PC-9 (cell line): ENCODE measurements at regions of chr1 and their contacts with region 1.

Region 1: GRCh38 chr1:201895913-201896807 is 7.5 kb downstream of the SHISA4 start:
- DNase-seq: peak; percentile 75 to 89
- H3K4me3 ChIP-seq: no peak overlapping the region
- H3K27ac ChIP-seq: peak overlapping the region; percentile 61
- H3K4me1 ChIP-seq: peaks cover 29% of the 10 kb centered on the region
- H3K27me3 ChIP-seq: no peaks in the 10 kb centered on the region
- CTCF ChIP-seq: peak; percentile 98

Region 2: DNA sequence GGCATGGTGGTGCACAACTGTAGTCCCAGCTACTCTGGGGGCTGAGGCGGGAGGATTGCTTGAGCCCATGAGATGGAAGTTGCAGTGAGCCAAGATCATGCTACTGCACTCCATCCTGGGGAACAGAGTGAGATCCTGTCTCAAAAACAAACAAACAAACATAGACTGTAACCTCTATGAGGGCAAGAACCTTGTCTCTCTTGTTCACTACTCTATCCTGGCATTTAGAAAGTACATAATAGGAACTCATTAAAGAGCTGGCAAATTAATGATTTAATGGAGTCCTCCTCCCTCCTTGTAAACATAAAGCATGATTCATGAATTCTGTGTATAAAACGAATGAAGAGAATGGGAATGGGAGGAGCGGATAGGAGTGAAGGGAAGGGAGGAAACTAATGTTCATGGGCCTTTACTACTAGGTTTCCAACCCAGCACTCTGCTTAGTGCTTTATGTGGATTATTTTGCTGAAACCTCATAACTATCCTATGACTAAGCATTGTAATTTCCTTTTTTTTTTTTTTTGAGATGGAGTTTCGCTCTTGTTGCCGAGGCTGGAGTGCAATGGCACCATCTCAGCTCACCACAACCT is 41.6 kb after region 1 on chr1:
- CTCF ChIA-PET with region 1: interaction called, 12 read pairs
- POLR2A ChIA-PET with region 1: no interaction called
- intact Hi-C with region 1: no loop called
- DNase-seq: peak in 1 of 2 experiments; percentile 52
- H3K4me3 ChIP-seq: no peak overlapping the region
- H3K27ac ChIP-seq: peak overlapping the region; percentile 62
- H3K4me1 ChIP-seq: peaks cover 27% of the 10 kb centered on the region
- H3K27me3 ChIP-seq: no peaks in the 10 kb centered on the region
- CTCF ChIP-seq: no peak

Region 3: DNA sequence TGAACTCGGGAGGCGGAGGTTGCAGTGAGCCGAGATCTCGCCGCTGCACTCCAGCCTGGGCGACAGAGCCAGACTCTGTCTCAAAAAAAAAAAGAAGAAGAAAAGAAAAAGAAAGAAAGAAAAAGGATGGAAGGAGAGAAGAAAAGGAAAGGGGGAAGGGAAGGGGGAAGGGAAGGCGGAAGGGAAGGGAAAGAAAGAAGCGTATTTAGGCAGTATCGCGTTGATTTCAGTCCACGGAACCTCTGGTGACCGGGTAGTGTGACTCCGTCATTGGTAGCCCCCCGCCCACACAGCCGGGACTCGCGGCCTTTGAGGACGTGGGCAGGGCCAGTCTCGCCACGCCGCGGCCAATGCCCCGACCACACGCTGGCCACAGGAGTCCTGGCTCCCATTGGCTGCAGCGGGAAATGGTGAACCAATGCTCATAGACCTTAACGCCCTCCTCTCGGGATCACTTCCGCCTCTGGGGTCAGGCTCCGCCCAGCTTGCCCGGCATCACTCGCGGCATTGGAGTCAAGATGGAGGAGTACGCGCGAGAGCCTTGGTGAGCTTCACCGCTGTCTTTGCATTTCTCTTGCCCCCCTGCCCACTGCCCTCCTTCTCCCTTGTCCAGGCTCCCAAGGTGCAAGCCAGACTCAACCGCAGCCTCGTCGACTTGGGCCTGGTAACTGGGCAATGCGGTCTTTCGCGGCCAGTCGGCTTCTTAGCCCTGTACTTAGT is 59.0 kb after region 1 on chr1 and contains the start of gene TIMM17A:
- CTCF ChIA-PET with region 1: interaction called, 3 read pairs
- POLR2A ChIA-PET with region 1: no interaction called
- intact Hi-C with region 1: loop called (anchors 1 kb)
- DNase-seq: peak; percentile 95
- H3K4me3 ChIP-seq: peak within 1 kb of the TSS; percentile 92
- H3K27ac ChIP-seq: peak within 1 kb of the TSS; percentile 83
- H3K4me1 ChIP-seq: peaks cover 10% of the 10 kb centered on the region; the same call in 1 of the 2 replicates
- H3K27me3 ChIP-seq: no peaks in the 10 kb centered on the region
- CTCF ChIP-seq: no peak
- total RNA-seq, gene TIMM17A: 55.7 and 60.4 TPM in 2 replicates

Region 4: GRCh38 chr1:201970334-201971159 is 74.4 kb after region 1 on chr1:
- CTCF ChIA-PET with region 1: interaction called, 16 read pairs
- POLR2A ChIA-PET with region 1: interaction called, 8 read pairs
- intact Hi-C with region 1: loop called (anchors 1 kb)
- DNase-seq: no peak
- H3K4me3 ChIP-seq: no peak overlapping the region
- H3K27ac ChIP-seq: no peak overlapping the region
- H3K4me1 ChIP-seq: 0 out of 2 replicates have a peak, but pooled peaks cover 6% of the 10 kb centered on the region
- H3K27me3 ChIP-seq: no peaks in the 10 kb centered on the region
- CTCF ChIP-seq: no peak

Region 5: GRCh38 chr1:202135221-202135721 is 239.1 kb after region 1 on chr1:
- CTCF ChIA-PET with region 1: interaction called, 4 read pairs
- POLR2A ChIA-PET with region 1: interaction called, 3 read pairs
- intact Hi-C with region 1: loop called (anchors 1 kb)
- DNase-seq: peak; percentile 49 to 50
- H3K4me3 ChIP-seq: no peak overlapping the region
- H3K27ac ChIP-seq: no peak overlapping the region
- H3K4me1 ChIP-seq: peaks cover 12% of the 10 kb centered on the region
- H3K27me3 ChIP-seq: no peaks in the 10 kb centered on the region
- CTCF ChIP-seq: peak; percentile 90